ENCODE measurements at regions of chr1 and their contacts with region 1.

Region 1: GRCh38 chr1:61724813-61725694 is at the start of gene TM2D1:
- DNase-seq: peak; percentile 84
- ATAC-seq: peak; percentile 99
- H3K4me3 ChIP-seq: peak within 1 kb of the TSS; percentile 73
- H3K27ac ChIP-seq: peak within 1 kb of the TSS; percentile 90
- H3K4me1 ChIP-seq: peaks cover 3% of the 10 kb centered on the region; the same call in 1 of the 2 replicates
- H3K27me3 ChIP-seq: no peaks in the 10 kb centered on the region
- CTCF ChIP-seq: no peak
- POLR2A ChIP-seq: peak; percentile 99
- RAD21 ChIP-seq: no peak
- total RNA-seq, gene TM2D1: 14.3 and 21.4 TPM in 2 replicates

Region 2: DNA sequence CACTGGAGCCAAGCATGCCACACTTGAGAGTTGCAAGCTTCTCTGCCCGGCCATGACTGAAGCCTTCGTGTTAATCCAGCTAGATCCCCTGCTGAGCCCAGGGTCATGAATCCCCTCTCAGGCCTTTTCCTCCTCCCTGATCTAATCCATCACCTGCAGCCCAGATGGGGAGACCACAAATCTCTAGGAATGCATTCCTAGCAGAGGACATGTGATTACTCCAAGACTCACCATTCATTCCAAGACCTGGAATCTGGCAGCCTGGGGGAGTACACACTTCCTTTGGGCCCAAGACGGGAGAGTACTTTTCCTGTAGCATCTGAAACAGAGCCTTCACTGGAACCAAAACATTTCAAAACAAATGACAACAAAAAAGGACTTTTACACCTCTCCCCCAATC is 912.0 kb before region 1 on chr1:
- CTCF ChIA-PET with region 1: no interaction called
- POLR2A ChIA-PET with region 1: no interaction called
- dilution Hi-C with region 1: no loop called
- in situ Hi-C with region 1: no loop called
- intact Hi-C with region 1: no loop called
- DNase-seq: no peak
- ATAC-seq: no peak
- H3K4me3 ChIP-seq: no peak overlapping the region
- H3K27ac ChIP-seq: no peak overlapping the region
- H3K4me1 ChIP-seq: no peaks in the 10 kb centered on the region
- H3K27me3 ChIP-seq: no peaks in the 10 kb centered on the region
- CTCF ChIP-seq: no peak
- POLR2A ChIP-seq: no peak
- RAD21 ChIP-seq: no peak

Region 3: DNA sequence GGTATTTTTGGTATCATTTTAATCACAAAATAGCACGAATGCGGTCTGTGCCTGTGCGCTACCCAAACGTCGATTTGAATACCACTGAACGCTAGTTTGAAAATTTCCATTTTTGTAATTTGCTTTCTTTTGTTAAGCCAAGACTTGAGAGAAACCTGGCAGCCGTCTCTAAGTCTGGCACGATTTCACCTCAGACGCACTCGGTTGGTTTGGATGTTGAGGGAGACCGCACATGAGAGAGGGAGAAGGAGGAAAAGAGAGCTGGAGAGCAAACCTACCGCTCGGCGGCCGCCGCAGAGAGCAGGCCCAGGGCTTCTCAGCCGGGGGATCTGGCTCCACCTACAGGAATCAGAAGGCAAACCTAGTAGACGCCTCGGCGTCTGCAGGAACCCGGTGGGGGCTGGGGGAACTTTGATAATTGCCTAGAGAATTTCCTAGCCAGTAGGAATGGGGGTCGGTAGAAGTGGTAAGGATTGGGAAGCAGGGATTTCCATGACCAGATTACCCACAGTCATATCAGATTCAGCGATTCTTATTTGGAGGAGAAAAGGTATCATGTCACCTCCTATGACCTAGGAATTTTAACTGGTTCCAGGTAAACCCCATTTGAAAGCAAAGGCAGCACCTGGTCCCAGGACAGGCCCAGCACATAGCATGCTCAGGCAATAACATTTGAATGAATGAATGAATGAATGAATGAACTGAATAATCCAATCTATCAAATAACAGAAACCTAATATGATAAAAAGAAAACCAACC is 83.3 kb before region 1 on chr1:
- CTCF ChIA-PET with region 1: no interaction called
- POLR2A ChIA-PET with region 1: no interaction called
- dilution Hi-C with region 1: no loop called
- in situ Hi-C with region 1: no loop called
- intact Hi-C with region 1: no loop called
- DNase-seq: peak; percentile 24
- ATAC-seq: peak; percentile 89
- H3K4me3 ChIP-seq: no peak overlapping the region
- H3K27ac ChIP-seq: no peak overlapping the region
- H3K4me1 ChIP-seq: no peaks in the 10 kb centered on the region
- H3K27me3 ChIP-seq: no peaks in the 10 kb centered on the region
- CTCF ChIP-seq: peak; percentile 55
- POLR2A ChIP-seq: no peak
- RAD21 ChIP-seq: peak; percentile 47

Region 4: GRCh38 chr1:61741711-61742619 is 16.9 kb after region 1 on chr1 and contains the start of gene PATJ:
- CTCF ChIA-PET with region 1: no interaction called
- POLR2A ChIA-PET with region 1: interaction called, 8 read pairs
- dilution Hi-C with region 1: no loop called
- in situ Hi-C with region 1: no loop called
- intact Hi-C with region 1: loop called (anchors 1 kb)
- DNase-seq: peak; percentile 4
- ATAC-seq: peak; percentile 55
- H3K4me3 ChIP-seq: peak within 1 kb of the TSS; percentile 80
- H3K27ac ChIP-seq: peak within 1 kb of the TSS; percentile 82
- H3K4me1 ChIP-seq: peaks cover 5% of the 10 kb centered on the region; the same call in 1 of the 2 replicates
- H3K27me3 ChIP-seq: no peaks in the 10 kb centered on the region
- CTCF ChIP-seq: no peak
- POLR2A ChIP-seq: no peak
- RAD21 ChIP-seq: no peak
- total RNA-seq, gene PATJ: 3.4 and 5.3 TPM in 2 replicates

Region 5: GRCh38 chr1:62012836-62013235 is 287.8 kb after region 1 on chr1:
- CTCF ChIA-PET with region 1: no interaction called
- POLR2A ChIA-PET with region 1: no interaction called
- dilution Hi-C with region 1: no loop called
- in situ Hi-C with region 1: no loop called
- intact Hi-C with region 1: no loop called
- DNase-seq: no peak
- ATAC-seq: no peak
- H3K4me3 ChIP-seq: no peak overlapping the region
- H3K27ac ChIP-seq: no peak overlapping the region
- H3K4me1 ChIP-seq: no peaks in the 10 kb centered on the region
- H3K27me3 ChIP-seq: no peaks in the 10 kb centered on the region
- CTCF ChIP-seq: no peak
- POLR2A ChIP-seq: no peak
- RAD21 ChIP-seq: no peak

Measured in IMR-90 (cell line).